GM12878 (cell line): ENCODE measurements at regions of chr15 and their contacts with region 1.

Region 1: GRCh38 chr15:80674245-80674614 is 20.9 kb upstream of the ABHD17C start:
- DNase-seq: peak; percentile 55
- ATAC-seq: peak; percentile 88
- H3K4me3 ChIP-seq: no peak overlapping the region
- H3K27ac ChIP-seq: peak overlapping the region; percentile 76
- H3K4me1 ChIP-seq: peaks cover 16% of the 10 kb centered on the region; the same call in 1 of the 2 replicates
- H3K27me3 ChIP-seq: no peaks in the 10 kb centered on the region
- CTCF ChIP-seq: no peak
- EP300 ChIP-seq: peak in 1 of 2 experiments; percentile 34; a peak in 1 of 4 replicates
- POLR2A ChIP-seq: no peak
- RAD21 ChIP-seq: no peak

Region 2: DNA sequence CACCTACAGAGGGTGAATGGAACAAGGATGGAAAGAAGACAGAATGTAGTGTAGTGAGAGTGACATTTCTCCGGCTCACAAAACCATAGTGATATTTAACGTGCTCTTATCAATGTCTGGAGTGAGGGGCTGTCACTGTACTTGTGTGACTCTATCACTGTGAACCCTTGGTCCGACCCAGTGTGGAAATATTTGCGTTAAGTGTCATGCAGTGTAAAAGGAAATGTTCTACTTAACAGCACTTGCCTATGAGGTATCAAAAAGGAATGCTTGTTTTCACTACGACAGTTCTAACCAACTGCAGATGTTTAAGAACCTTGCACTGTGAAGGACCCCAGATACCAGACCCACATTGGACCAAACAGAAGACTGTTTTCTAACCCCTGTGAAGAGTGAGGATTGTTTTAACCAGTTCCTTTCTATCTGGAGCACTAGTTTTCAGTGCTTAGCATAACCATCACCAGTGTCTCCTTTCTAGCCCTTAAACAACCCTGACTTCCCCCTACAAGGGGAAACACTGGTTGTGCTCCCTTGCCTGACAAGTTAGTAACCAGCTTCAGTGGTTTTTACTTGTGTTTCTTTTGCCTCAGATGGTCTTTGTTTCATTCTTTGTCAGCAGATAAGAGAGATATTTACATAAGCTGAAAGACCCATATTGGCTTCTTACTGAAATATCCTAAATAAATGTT is 123.9 kb before region 1 on chr15:
- CTCF ChIA-PET with region 1: no interaction called
- POLR2A ChIA-PET with region 1: no interaction called
- RAD21 ChIA-PET with region 1: no interaction called
- SMC1A ChIA-PET with region 1: no interaction called
- in situ Hi-C with region 1: no loop called
- intact Hi-C with region 1: no loop called
- DNase-seq: peak; percentile 5
- ATAC-seq: peak; percentile 78
- H3K4me3 ChIP-seq: no peak overlapping the region
- H3K27ac ChIP-seq: no peak overlapping the region
- H3K4me1 ChIP-seq: peaks cover 7% of the 10 kb centered on the region
- H3K27me3 ChIP-seq: peaks cover 0 to 5% of the 10 kb centered on the region in 2 experiments; a peak in 2 of 4 replicates
- CTCF ChIP-seq: no peak
- EP300 ChIP-seq: no peak
- POLR2A ChIP-seq: no peak
- RAD21 ChIP-seq: no peak

Region 3: GRCh38 chr15:80660122-80660521 is 14.1 kb before region 1 on chr15:
- CTCF ChIA-PET with region 1: interaction called, 11 read pairs
- POLR2A ChIA-PET with region 1: no interaction called
- RAD21 ChIA-PET with region 1: interaction called, 6 read pairs
- SMC1A ChIA-PET with region 1: interaction called, 8 read pairs
- in situ Hi-C with region 1: no loop called
- intact Hi-C with region 1: no loop called
- DNase-seq: no peak
- ATAC-seq: no peak
- H3K4me3 ChIP-seq: no peak overlapping the region
- H3K27ac ChIP-seq: no peak overlapping the region
- H3K4me1 ChIP-seq: no peaks in the 10 kb centered on the region
- H3K27me3 ChIP-seq: no peaks in the 10 kb centered on the region; a peak in 2 of 4 replicates
- CTCF ChIP-seq: peak; percentile 5 to 25 (median 18); a peak in 3 of 6 replicates
- EP300 ChIP-seq: no peak
- POLR2A ChIP-seq: no peak
- RAD21 ChIP-seq: peak; percentile 29

Region 4: DNA sequence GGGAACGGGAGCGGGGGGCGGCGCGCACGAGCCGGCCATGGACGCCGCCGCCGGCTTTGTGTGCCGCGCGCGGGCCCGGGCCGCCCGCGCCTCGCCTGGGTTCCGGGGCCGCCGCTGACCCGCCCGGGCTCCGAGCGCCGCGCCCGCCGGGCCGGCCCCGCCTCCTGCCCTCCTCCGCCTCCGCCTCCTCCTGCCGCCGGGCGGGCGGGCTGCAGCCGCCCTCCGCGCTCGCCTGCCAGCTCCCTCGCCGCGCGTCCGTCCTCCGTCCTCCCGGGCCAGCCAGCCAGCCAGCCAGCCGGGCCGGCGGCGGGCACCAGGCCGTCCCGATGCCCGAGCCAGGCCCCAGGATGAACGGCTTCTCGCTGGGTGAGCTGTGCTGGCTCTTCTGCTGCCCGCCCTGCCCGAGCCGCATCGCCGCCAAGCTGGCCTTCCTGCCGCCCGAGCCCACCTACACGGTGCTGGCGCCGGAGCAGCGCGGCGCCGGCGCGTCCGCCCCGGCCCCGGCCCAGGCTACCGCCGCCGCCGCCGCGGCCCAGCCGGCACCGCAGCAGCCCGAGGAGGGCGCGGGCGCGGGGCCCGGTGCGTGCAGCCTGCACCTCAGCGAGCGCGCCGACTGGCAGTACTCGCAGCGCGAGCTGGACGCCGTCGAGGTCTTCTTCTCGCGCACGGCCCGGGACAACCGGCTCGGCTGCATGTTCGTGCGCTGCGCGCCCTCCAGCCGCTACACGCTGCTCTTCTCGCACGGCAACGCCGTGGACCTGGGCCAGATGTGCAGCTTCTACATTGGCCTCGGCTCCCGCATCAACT is 21.1 kb after region 1 on chr15 and contains the start of gene ABHD17C:
- CTCF ChIA-PET with region 1: interaction called, 27 read pairs
- POLR2A ChIA-PET with region 1: interaction called, 23 read pairs
- RAD21 ChIA-PET with region 1: interaction called, 17 read pairs
- SMC1A ChIA-PET with region 1: interaction called, 18 read pairs
- in situ Hi-C with region 1: no loop called
- intact Hi-C with region 1: no loop called
- DNase-seq: no peak
- ATAC-seq: peak; percentile 71
- H3K4me3 ChIP-seq: peak within 1 kb of the TSS; percentile 88
- H3K27ac ChIP-seq: 0 out of 2 replicates have a peak within 1 kb of the TSS, but pooled peaks have one; percentile 8
- H3K4me1 ChIP-seq: peaks cover 3% of the 10 kb centered on the region; the same call in 1 of the 2 replicates
- H3K27me3 ChIP-seq: no peaks in the 10 kb centered on the region
- CTCF ChIP-seq: peak in 1 of 3 experiments; percentile 13; a peak in 1 of 6 replicates
- EP300 ChIP-seq: no peak
- POLR2A ChIP-seq: no peak; the same call in none of the 2 replicates
- RAD21 ChIP-seq: no peak
- polyA plus RNA-seq, gene ABHD17C: 4.9 to 6.2 TPM